ENCODE measurements at regions of chr6 and their contacts with region 1.

Region 1: GRCh38 chr6:80106418-80107235 is at the start of gene BCKDHB:
- DNase-seq: peak; percentile 99
- ATAC-seq: peak; percentile 100
- H3K4me3 ChIP-seq: peak within 1 kb of the TSS; percentile 77
- H3K27ac ChIP-seq: peak within 1 kb of the TSS; percentile 86
- H3K4me1 ChIP-seq: peaks cover 2% of the 10 kb centered on the region
- H3K27me3 ChIP-seq: no peaks in the 10 kb centered on the region
- total RNA-seq, gene BCKDHB: 12.3 to 23.9 (median 18.8) TPM

Region 2: DNA sequence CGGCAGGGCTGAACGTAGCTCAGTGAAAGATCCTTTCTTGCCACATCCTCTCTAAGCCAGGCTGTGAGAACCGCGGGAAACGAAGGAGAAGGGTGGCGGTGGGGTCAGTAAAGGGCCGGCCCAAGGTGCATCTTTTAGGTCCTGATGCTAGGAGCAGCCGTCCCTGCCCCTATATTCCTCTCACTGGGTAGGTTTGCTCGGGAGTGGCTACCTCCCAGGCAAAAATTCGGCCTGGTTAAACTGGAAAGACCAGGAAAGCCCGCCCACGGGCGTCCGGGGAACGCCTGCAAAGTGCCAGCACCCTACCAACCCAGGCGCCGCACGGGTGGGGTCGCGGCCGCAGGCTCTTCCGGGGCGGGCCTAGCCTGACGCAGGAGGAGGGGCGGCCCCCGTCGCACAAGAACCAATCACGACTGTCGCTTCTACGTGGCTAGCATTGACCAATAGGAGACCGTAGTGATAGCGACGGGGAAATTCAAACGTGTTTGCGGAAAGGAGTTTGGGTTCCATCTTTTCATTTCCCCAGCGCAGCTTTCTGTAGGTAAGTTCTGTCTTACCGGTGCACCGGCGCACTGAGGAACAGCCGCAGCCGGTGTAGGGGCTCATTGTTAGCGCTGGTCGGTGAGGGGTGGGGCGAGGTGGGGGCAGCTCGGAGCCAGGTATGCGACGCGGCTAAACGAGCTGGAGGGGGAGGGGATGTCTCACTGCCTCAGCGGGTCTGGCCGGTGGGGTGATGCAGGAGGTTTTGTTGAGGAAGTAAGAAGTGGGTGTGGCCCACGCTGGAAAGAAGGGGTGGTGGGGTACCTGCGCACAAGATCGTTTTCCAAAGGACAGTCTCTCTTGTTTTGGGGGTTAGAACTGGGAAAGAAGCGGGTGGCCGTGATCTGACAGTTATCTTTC is 102.2 kb before region 1 on chr6 and contains the start of gene TTK:
- intact Hi-C with region 1: loop called in 1 of 4 experiments (anchors 10 kb)
- DNase-seq: peak; percentile 95 to 98 (median 96)
- ATAC-seq: peak; percentile 100
- H3K4me3 ChIP-seq: peak within 1 kb of the TSS; percentile 86
- H3K27ac ChIP-seq: peak within 1 kb of the TSS; percentile 89
- H3K4me1 ChIP-seq: no peaks in the 10 kb centered on the region
- H3K27me3 ChIP-seq: no peaks in the 10 kb centered on the region
- total RNA-seq, gene TTK: 0.31 to 0.86 (median 0.47) TPM in 3 of 4 donors, not detected in the other

Measured in right cardiac atrium (tissue), 5 donors.